ENCODE measurements at regions of chr2 and their contacts with region 1.

Region 1: DNA sequence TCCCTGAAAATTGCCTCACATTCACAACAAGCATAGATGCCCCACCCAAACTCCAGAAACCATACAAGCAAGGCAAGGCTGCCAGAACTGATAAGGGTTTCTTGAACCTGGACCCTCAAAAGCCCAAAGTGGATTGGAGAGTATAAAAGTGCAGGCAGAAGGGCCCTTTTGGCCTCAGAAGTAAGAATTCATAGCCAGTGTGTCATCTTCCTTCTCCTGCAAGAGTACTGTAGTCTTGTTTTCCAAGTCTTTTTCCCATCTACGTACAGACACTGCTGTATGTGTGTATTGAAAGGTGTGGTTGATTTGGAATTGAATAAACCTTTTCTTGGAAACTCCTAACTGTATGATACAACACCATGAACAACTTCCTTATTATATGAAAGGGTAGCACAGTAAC is 46.8 kb downstream of the ZC3H15 start:
- DNase-seq: no peak
- ATAC-seq: no peak
- H3K4me3 ChIP-seq: no peak overlapping the region
- H3K27ac ChIP-seq: peak overlapping the region; percentile 47
- H3K4me1 ChIP-seq: peaks cover 52% of the 10 kb centered on the region
- H3K27me3 ChIP-seq: no peaks in the 10 kb centered on the region
- CTCF ChIP-seq: no peak
- EP300 ChIP-seq: no peak
- POLR2A ChIP-seq: no peak
- RAD21 ChIP-seq: no peak

Region 2: DNA sequence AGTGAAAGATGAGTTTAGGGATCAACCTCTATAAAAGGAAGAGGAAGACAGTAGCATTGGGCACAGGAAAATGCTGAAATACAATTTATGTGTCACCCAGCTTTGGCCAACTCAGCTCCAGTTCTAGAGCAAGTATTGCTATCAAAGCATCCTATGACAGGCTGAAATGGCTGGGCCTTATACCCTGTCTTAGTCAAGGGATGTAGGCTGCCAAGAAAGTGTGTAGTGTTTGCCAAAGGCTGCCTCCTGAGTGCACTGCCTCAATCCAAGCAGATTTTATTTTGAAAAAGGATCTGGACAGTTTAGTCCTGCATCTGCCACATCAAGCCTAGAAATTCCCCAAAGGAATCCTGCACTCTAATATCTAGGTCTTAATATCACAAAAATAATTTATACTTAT is 406.7 kb before region 1 on chr2:
- CTCF ChIA-PET with region 1: no interaction called
- POLR2A ChIA-PET with region 1: no interaction called
- in situ Hi-C with region 1: no loop called
- intact Hi-C with region 1: no loop called
- DNase-seq: no peak
- ATAC-seq: no peak
- H3K4me3 ChIP-seq: no peak overlapping the region
- H3K27ac ChIP-seq: no peak overlapping the region
- H3K4me1 ChIP-seq: peaks cover 28% of the 10 kb centered on the region
- H3K27me3 ChIP-seq: no peaks in the 10 kb centered on the region
- CTCF ChIP-seq: no peak
- EP300 ChIP-seq: no peak
- POLR2A ChIP-seq: no peak
- RAD21 ChIP-seq: no peak

Region 3: DNA sequence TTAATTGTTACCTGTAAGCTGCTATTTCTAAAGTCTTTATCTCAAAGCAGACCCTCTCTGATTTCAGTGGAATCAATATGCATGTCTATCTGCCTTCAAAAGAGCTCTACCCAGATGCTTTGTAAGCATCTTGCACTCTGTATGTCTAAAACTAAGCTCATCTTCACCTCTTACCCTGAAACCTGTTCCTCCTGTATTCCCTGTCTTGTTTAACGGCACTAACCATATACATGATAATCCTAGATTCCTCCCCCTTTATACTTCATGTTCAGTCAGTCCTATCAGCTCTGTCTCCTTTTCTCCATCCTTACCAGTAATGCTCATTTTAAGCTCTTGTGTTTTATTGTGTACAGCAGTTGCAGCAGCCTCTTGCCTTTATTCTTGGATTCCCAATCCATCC is 34.1 kb before region 1 on chr2:
- CTCF ChIA-PET with region 1: no interaction called
- POLR2A ChIA-PET with region 1: no interaction called
- in situ Hi-C with region 1: no loop called
- intact Hi-C with region 1: loop called (anchors 1 kb)
- DNase-seq: no peak
- ATAC-seq: no peak
- H3K4me3 ChIP-seq: no peak overlapping the region
- H3K27ac ChIP-seq: no peak overlapping the region
- H3K4me1 ChIP-seq: no peaks in the 10 kb centered on the region
- H3K27me3 ChIP-seq: no peaks in the 10 kb centered on the region
- CTCF ChIP-seq: no peak
- EP300 ChIP-seq: no peak
- POLR2A ChIP-seq: no peak
- RAD21 ChIP-seq: no peak

Measured in HepG2 (cell line).